ENCODE measurements at regions of chr1 and their contacts with region 1.

Region 1: DNA sequence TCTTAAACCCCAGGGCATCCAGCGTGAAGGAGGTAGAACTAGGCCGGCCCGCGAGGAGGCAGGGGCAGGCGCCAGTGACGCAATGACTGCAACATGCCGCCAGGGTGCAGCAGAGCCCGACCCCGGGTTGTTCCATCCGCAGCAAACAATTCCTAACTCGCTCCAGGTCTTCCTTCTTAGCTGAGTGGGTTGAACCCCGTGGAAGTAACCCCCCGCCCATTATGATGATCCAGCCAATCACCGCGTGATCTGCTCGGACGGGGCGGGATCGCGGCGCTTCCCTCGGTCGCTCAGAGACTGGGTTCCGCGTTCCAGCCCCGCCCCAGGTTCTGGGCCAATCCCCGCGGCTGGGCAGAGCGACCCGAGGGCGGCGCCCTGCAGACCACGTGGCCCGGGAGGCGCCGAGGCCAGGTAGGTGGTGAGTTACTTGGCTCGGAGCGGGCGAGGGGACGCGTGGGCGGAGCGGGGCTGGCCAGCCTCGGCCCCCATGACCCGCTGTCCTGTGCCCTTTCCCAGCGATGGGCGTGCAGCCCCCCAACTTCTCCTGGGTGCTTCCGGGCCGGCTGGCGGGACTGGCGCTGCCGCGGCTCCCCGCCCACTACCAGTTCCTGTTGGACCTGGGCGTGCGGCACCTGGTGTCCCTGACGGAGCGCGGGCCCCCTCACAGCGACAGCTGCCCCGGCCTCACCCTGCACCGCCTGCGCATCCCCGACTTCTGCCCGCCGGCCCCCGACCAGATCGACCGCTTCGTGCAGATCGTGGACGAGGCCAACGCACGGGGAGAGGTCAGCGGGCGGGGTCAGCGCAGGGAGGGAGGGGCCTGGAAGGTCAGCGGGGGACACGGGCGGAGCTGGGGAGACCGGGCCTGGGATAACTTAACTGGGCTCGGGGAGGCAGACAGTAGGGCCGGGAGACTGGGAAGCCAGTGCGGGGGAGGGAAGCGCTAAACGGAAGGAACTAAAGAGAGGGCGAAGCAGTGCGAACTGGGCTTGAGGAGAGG is at the start of gene DUSP23:
- DNase-seq: peak; percentile 98 to 99
- ATAC-seq: peak; percentile 93 to 97 (median 96)
- H3K4me3 ChIP-seq: peak within 1 kb of the TSS; percentile 72
- H3K27ac ChIP-seq: peak within 1 kb of the TSS; percentile 71
- H3K4me1 ChIP-seq: peaks cover 14% of the 10 kb centered on the region
- H3K27me3 ChIP-seq: no peaks in the 10 kb centered on the region
- CTCF ChIP-seq: peak; percentile 94
- total RNA-seq, gene DUSP23: 18.5 to 46.5 (median 29.3) TPM

Region 2: GRCh38 chr1:159214149-159214760 is 566.6 kb before region 1 on chr1:
- intact Hi-C with region 1: loop called in 1 of 2 experiments (anchors 10 kb)
- DNase-seq: no peak
- ATAC-seq: peak in 3 of 4 donors; percentile 67 to 74 (median 73)
- H3K4me3 ChIP-seq: no peak overlapping the region
- H3K27ac ChIP-seq: no peak overlapping the region
- H3K4me1 ChIP-seq: no peaks in the 10 kb centered on the region
- H3K27me3 ChIP-seq: peaks cover 0 to 18% (median 3%) of the 10 kb centered on the region in 3 donors
- CTCF ChIP-seq: peak; percentile 80

Region 3: DNA sequence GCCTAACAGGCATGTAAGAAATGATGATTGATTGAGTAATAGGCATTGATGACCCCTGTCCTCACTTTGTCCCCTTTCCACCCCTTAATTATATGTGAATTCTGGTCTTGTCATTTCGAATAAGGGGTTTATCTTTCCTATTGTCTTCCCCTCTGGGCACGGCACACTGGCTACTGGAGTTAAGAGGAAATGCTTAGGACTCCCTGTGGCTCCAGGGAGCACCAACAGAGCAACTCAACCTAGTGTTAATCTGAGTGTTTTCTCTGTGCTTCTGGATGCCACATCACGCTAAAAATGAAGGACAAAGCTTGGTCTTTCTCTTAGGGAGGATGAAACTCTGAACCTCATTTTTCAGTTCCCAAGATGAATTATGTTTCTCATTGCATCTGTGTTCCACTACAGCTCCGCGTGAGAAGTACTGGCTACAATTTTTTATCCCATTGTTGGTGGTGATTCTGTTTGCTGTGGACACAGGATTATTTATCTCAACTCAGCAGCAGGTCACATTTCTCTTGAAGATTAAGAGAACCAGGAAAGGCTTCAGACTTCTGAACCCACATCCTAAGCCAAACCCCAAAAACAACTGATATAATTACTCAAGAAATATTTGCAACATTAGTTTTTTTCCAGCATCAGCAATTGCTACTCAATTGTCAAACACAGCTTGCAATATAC is 473.4 kb before region 1 on chr1:
- intact Hi-C with region 1: no loop called
- DNase-seq: no peak
- ATAC-seq: no peak
- H3K4me3 ChIP-seq: no peak overlapping the region
- H3K27ac ChIP-seq: no peak overlapping the region
- H3K4me1 ChIP-seq: no peaks in the 10 kb centered on the region
- H3K27me3 ChIP-seq: no peaks in the 10 kb centered on the region
- CTCF ChIP-seq: no peak

Region 4: DNA sequence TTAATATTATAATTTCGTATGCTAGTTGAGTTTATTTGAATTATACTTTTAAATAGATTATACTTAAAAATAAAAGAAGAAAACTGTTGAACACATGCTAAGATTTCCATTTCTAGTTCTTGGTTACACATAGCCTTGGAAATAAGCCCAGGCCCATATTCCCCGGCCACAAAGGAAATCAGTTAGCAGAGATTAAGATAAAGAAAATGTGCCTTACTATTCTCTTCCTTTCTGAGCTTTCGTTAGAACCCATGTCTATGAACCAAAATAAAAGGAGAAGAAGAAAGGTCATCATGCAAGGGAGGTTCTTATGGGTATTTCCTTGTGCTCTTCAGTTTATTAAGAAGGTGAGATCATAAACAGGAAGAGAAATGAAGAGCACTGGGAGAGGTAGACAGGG is 34.2 kb before region 1 on chr1:
- intact Hi-C with region 1: no loop called
- DNase-seq: no peak
- ATAC-seq: no peak
- H3K4me3 ChIP-seq: no peak overlapping the region
- H3K27ac ChIP-seq: no peak overlapping the region
- H3K4me1 ChIP-seq: no peaks in the 10 kb centered on the region
- H3K27me3 ChIP-seq: no peaks in the 10 kb centered on the region
- CTCF ChIP-seq: no peak

Region 5: DNA sequence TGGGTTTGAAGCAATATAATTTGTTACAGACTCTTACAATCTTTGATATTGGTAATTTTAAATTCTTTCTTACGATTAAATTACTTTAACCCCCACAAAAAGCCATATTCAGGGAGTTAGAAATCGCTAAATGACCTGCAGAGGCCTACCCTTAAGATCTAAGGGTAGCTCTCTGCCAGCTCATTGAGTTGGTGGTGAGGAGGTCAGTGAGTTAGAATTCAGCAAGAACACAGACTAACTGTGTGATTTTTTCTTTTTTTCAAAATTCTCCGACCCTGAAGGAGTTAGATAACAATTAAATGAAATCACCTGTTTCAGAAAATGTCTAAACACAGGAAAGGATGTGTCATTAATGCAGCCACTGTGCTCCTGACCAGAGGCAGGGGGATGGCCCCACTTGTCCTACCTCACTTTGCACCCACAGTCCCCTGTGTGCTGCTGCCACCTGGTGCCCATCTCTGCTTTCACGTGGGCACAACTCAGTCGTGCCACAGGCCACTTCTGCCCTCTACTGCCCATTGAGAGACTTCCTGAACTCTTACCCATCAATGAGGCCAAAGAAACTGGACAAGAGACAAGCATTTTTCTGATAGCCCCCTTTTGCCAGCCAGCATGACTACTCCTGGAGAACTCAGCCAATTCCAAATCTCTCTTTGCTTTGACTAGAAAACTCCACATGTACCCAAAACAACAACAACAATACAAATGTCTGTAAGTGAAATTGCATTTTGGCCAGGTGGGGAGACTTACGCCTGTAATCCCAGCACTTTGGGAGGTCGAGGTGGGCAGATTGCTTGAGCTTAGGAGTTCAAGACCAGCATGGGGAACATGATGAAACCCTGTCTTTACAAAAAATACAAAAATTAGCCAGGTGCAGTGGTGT is 110.6 kb after region 1 on chr1:
- intact Hi-C with region 1: loop called in 1 of 2 experiments (anchors 5 kb)
- DNase-seq: peak; percentile 79 to 88
- ATAC-seq: peak; percentile 97 to 99 (median 98)
- H3K4me3 ChIP-seq: no peak overlapping the region
- H3K27ac ChIP-seq: no peak overlapping the region
- H3K4me1 ChIP-seq: peaks cover 5% of the 10 kb centered on the region
- H3K27me3 ChIP-seq: no peaks in the 10 kb centered on the region
- CTCF ChIP-seq: peak; percentile 97

Region 6: GRCh38 chr1:159908031-159908940 is 127.4 kb after region 1 on chr1:
- intact Hi-C with region 1: no loop called
- DNase-seq: no peak
- ATAC-seq: no peak
- H3K4me3 ChIP-seq: no peak overlapping the region
- H3K27ac ChIP-seq: no peak overlapping the region
- H3K4me1 ChIP-seq: no peaks in the 10 kb centered on the region
- H3K27me3 ChIP-seq: no peaks in the 10 kb centered on the region
- CTCF ChIP-seq: no peak

Region 7: DNA sequence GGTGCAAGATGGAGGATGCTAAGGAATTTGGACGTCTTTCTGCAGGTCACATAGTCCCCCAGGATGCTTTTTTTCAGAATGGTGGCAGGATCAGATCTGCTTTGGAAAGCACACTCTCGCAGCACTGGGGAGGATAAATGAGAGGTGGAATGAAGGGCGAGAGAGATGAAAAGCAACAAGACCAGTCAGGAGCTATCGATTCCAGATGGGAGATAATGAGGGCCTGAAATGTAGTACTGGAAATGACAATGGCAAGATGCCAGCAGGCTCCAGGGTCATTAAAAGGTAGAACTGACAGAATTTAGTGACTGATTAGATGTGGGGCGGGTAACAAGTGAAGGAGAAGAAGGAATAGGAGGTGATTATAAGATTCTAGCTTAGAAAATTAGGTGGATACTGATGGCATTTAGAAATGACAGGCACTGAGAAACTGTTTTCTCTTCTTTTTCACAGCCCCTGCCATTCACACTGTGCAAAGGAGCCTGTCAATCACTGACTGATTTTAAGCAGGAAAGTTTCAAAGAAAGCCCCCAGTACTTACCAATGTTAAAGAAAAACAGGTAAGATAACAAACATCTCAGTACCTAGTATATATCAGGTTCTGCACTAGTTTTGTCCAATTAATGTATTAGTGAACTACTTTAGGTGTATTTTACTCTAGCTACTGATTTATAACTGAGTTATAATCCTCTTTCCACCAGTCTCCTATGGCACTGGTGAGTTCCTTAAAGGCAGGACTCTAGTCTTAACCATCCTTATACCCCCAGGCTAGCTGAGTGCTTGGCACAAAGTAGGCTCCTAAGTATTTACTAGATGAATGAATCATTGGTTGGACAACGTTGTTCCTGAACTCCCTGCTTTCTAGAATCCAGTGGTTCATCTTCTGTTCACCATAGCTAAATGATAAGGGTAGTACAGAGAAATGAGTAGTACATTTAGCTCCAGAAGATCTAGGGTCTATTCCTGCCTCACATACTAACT is 241.7 kb after region 1 on chr1:
- intact Hi-C with region 1: loop called in 1 of 2 experiments (anchors 10 kb)
- DNase-seq: no peak
- ATAC-seq: no peak
- H3K4me3 ChIP-seq: no peak overlapping the region
- H3K27ac ChIP-seq: no peak overlapping the region
- H3K4me1 ChIP-seq: no peaks in the 10 kb centered on the region
- H3K27me3 ChIP-seq: no peaks in the 10 kb centered on the region
- CTCF ChIP-seq: no peak

Region 8: GRCh38 chr1:160031365-160032164 is 250.7 kb after region 1 on chr1 and contains the start of gene PIGM:
- intact Hi-C with region 1: loop called (anchors 5 to 10 kb)
- DNase-seq: peak; percentile 95 to 96
- ATAC-seq: peak; percentile 98
- H3K4me3 ChIP-seq: peak within 1 kb of the TSS; percentile 78
- H3K27ac ChIP-seq: peak within 1 kb of the TSS; percentile 74
- H3K4me1 ChIP-seq: peaks cover 17% of the 10 kb centered on the region
- H3K27me3 ChIP-seq: no peaks in the 10 kb centered on the region
- CTCF ChIP-seq: no peak
- total RNA-seq, gene PIGM: 0.84 to 1.5 (median 1.4) TPM